Natural killer cell (primary cell): ENCODE measurements at regions of chr3 and their contacts with region 1.

Region 1: DNA sequence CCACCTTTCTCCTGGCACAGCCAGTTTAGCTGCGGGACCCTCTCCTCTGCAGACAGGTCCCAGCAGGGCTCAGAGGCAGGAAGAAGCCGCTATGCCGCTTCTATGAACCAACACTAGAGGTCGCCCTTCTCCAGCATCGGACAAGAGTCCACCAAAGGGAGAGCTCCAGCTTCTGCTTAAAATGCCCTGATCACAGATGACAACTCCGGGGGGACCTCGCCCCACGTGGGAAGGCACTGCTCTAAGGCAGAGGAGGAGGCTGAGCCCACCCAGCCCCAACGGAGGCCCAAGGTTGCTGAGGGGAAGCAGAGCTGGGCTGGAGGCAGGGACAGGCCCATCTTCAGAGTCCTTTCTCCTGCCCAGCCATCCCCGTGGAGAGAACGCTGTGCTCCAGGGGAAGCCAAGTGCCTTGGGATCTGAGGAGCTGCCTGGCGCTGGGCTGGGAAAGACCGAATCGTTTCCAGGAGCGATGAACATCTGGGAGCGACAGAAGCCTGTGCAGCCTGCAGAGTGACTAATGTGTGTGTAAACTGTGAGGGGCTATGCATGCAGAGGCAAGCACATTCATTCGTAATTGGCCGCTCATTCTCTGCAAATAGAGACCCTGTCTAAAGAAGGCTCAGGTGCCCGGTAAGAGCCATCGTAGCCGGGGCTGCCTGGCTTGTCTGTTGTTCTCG is 43.5 kb upstream of the BDH1 start:
- DNase-seq: peak; percentile 63 to 88
- ATAC-seq: peak; percentile 90 to 99 (median 98)
- H3K4me3 ChIP-seq: no peak overlapping the region
- H3K4me3 Mint-ChIP-seq: no peak overlapping the region
- H3K27ac ChIP-seq: no peak overlapping the region
- H3K27ac Mint-ChIP-seq: no peak overlapping the region
- H3K4me1 ChIP-seq: peaks cover 7% of the 10 kb centered on the region
- H3K4me1 Mint-ChIP-seq: peaks cover 0 to 11% of the 10 kb centered on the region in 2 donors
- H3K27me3 ChIP-seq: no peaks in the 10 kb centered on the region
- H3K27me3 Mint-ChIP-seq: peaks cover 0 to 4% of the 10 kb centered on the region in 2 donors
- CTCF ChIP-seq: peak; percentile 93

Region 2: GRCh38 chr3:197667978-197668377 is 68.8 kb after region 1 on chr3:
- intact Hi-C with region 1: loop called (anchors 5 kb)
- DNase-seq: no peak
- ATAC-seq: no peak
- H3K4me3 ChIP-seq: no peak overlapping the region
- H3K4me3 Mint-ChIP-seq: no peak overlapping the region
- H3K27ac ChIP-seq: no peak overlapping the region
- H3K27ac Mint-ChIP-seq: no peak overlapping the region
- H3K4me1 ChIP-seq: peaks cover 7% of the 10 kb centered on the region
- H3K4me1 Mint-ChIP-seq: no peaks in the 10 kb centered on the region
- H3K27me3 ChIP-seq: no peaks in the 10 kb centered on the region
- H3K27me3 Mint-ChIP-seq: no peaks in the 10 kb centered on the region
- CTCF ChIP-seq: no peak

Region 3: GRCh38 chr3:197801891-197802778 is 202.9 kb after region 1 on chr3:
- intact Hi-C with region 1: loop called (anchors 5 kb)
- DNase-seq: peak in 1 of 2 donors; percentile 63
- ATAC-seq: peak; percentile 74 to 86 (median 80)
- H3K4me3 ChIP-seq: no peak overlapping the region
- H3K4me3 Mint-ChIP-seq: peak overlapping the region; percentile 60
- H3K27ac ChIP-seq: peak overlapping the region; percentile 34
- H3K27ac Mint-ChIP-seq: peak overlapping the region; percentile 79 to 89
- H3K4me1 ChIP-seq: peaks cover 6% of the 10 kb centered on the region
- H3K4me1 Mint-ChIP-seq: peaks cover 54% of the 10 kb centered on the region in 2 donors
- H3K27me3 ChIP-seq: no peaks in the 10 kb centered on the region
- H3K27me3 Mint-ChIP-seq: no peaks in the 10 kb centered on the region
- CTCF ChIP-seq: peak; percentile 54